Spleen (tissue), 13 donors: ENCODE measurements at regions of chr4 and their contacts with region 1.

Region 1: DNA sequence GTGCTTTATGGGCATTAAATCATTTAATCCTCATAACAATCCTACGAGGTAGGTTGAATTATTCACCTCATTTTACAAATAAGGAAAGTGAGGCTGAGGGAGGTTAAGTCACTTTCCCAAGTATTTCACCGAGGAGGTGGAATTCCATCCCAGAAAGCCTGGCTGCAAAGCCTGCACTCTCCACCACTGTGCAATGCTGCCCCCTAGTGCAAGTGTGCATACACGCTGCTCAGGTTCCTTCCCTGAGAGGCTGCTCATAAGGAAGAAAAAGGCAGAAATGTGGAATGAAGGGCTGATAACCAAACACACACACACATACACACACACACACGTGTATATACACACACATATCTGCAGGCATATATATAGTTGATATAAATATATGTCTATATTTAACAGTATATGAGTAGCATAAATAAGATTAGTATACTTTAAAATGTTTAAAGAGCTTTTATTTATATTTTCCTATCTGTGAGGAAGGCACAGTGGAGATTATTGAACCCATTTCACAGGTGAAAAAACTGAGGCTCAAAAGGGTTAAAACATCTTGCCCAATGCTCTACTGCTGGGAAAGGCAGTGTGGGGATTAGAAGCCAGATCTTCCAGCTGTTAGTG is 714.5 kb upstream of the TENM3 start:
- DNase-seq: no peak
- H3K4me3 ChIP-seq: no peak overlapping the region
- H3K27ac ChIP-seq: no peak overlapping the region
- H3K4me1 ChIP-seq: no peaks in the 10 kb centered on the region
- H3K27me3 ChIP-seq: no peaks in the 10 kb centered on the region
- CTCF ChIP-seq: peak in 8 of 11 experiments; percentile 16 to 64 (median 51)
- POLR2A ChIP-seq: no peak

Region 2: GRCh38 chr4:181143250-181143854 is 385.3 kb before region 1 on chr4:
- intact Hi-C with region 1: loop called (anchors 10 kb)
- DNase-seq: peak; percentile 85
- H3K4me3 ChIP-seq: no peak overlapping the region
- H3K27ac ChIP-seq: no peak overlapping the region
- H3K4me1 ChIP-seq: no peaks in the 10 kb centered on the region
- H3K27me3 ChIP-seq: peaks cover 0 to 9% (median 0%) of the 10 kb centered on the region in 7 donors
- CTCF ChIP-seq: peak in 10 of 11 experiments; percentile 41 to 84 (median 75)
- POLR2A ChIP-seq: no peak